PC-3 (cell line): ENCODE measurements at regions of chr18 and their contacts with region 1.

Region 1: DNA sequence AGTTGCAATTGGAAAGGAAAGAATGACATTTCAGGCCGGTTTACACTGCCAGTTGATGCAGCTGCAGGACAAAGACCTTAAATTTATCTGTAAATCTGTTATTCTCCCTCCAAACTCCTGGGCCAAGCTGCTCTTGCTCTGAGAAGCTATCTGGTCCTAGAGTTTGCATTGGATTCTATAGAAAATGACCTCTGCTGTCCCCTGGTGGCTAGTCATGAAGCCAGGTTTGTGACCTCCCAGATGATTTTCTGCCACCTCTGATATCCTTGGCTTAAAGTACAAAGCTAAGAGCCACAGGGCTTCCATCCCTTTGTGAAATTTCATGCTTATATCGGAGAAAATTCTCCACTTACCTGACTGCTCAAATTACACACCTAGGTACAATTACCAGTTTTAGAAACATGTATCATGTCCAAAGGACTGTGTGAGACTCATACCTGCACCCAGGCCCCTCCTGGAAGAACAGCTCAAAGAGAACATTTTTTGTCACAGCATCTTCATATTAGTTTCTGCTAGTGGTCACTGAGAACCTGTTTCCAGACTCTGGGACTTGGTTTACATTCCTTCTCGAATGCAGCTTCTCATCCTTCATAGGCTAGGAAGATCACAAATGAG is 28.9 kb upstream of the IER3IP1 start:
- DNase-seq: peak; percentile 30
- ATAC-seq: peak; percentile 69
- H3K4me3 ChIP-seq: no peak overlapping the region
- H3K27ac ChIP-seq: no peak overlapping the region
- H3K4me1 ChIP-seq: no peaks in the 10 kb centered on the region
- H3K27me3 ChIP-seq: peaks cover 14% of the 10 kb centered on the region
- CTCF ChIP-seq: peak; percentile 62

Region 2: GRCh38 chr18:47050468-47050867 is 154.5 kb before region 1 on chr18:
- CTCF ChIA-PET with region 1: no interaction called
- POLR2A ChIA-PET with region 1: no interaction called
- intact Hi-C with region 1: loop called (anchors 1 kb)
- DNase-seq: peak; percentile 37
- ATAC-seq: no peak
- H3K4me3 ChIP-seq: no peak overlapping the region
- H3K27ac ChIP-seq: no peak overlapping the region
- H3K4me1 ChIP-seq: no peaks in the 10 kb centered on the region
- H3K27me3 ChIP-seq: no peaks in the 10 kb centered on the region
- CTCF ChIP-seq: peak; percentile 66; the same call in 1 of the 2 replicates

Region 3: GRCh38 chr18:47100214-47100831 is 104.7 kb before region 1 on chr18:
- CTCF ChIA-PET with region 1: no interaction called
- POLR2A ChIA-PET with region 1: no interaction called
- intact Hi-C with region 1: loop called (anchors 1 kb)
- DNase-seq: peak; percentile 61
- ATAC-seq: peak; percentile 87
- H3K4me3 ChIP-seq: no peak overlapping the region
- H3K27ac ChIP-seq: no peak overlapping the region
- H3K4me1 ChIP-seq: no peaks in the 10 kb centered on the region
- H3K27me3 ChIP-seq: no peaks in the 10 kb centered on the region
- CTCF ChIP-seq: peak; percentile 63

Region 4: GRCh38 chr18:47150029-47150823 is 54.8 kb before region 1 on chr18 and contains the start of gene HDHD2:
- CTCF ChIA-PET with region 1: no interaction called
- POLR2A ChIA-PET with region 1: no interaction called
- intact Hi-C with region 1: loop called (anchors 1 kb)
- DNase-seq: peak; percentile 58
- ATAC-seq: peak; percentile 91
- H3K4me3 ChIP-seq: peak within 1 kb of the TSS; percentile 79
- H3K27ac ChIP-seq: peak within 1 kb of the TSS; percentile 59
- H3K4me1 ChIP-seq: no peaks in the 10 kb centered on the region
- H3K27me3 ChIP-seq: no peaks in the 10 kb centered on the region
- CTCF ChIP-seq: no peak
- total RNA-seq, gene HDHD2: 6.3 TPM in 2 replicates